ENCODE measurements at regions of chr9 and their contacts with region 1.

Region 1: DNA sequence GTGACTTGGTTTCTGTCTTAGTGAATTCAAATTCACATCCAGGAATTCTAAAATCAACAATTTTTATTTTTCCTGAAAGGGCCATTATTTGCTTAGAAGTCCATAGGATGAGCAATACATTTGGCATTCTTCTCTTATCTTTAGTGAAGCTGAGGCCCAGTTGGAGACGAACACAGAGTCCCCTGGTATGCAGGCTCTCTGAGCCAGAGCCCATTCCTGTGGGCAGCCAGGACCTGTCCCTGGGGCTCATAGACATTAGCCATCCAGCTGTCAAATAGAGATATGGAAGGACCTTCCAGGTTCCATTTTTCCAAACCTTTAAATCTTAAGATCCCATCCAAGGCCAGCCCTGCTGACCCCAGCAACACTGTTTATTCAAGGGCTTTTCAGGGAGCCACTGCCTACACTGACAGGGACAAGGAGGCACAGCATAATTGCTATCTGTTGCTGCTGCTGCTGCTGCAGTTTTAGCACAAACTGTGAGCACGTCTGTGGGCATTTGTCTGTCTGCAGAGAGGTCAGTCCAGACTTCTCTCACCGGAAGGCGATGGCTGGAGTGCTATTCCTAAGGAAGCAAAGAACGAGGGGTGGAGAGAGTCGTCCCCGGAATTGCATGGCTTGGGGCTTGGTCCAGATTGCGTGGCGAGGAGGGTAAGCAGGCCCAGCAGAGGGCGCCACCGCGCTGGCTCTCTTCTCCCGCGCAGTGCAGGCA is 639.0 kb downstream of the CCDC171 start:
- DNase-seq: peak; percentile 35
- H3K4me3 ChIP-seq: no peak overlapping the region
- H3K27ac ChIP-seq: no peak overlapping the region
- H3K4me1 ChIP-seq: peaks cover 6% of the 10 kb centered on the region
- H3K27me3 ChIP-seq: no peaks in the 10 kb centered on the region
- CTCF ChIP-seq: peak; percentile 61 to 88

Region 2: GRCh38 chr9:15873569-15874177 is 318.2 kb before region 1 on chr9:
- CTCF ChIA-PET with region 1: no interaction called
- dilution Hi-C with region 1: no loop called
- in situ Hi-C with region 1: no loop called
- intact Hi-C with region 1: loop called (anchors 2 kb)
- DNase-seq: peak; percentile 30
- H3K4me3 ChIP-seq: no peak overlapping the region
- H3K27ac ChIP-seq: peak overlapping the region; percentile 5
- H3K4me1 ChIP-seq: no peaks in the 10 kb centered on the region
- H3K27me3 ChIP-seq: no peaks in the 10 kb centered on the region
- CTCF ChIP-seq: peak; percentile 53 to 68

Region 3: DNA sequence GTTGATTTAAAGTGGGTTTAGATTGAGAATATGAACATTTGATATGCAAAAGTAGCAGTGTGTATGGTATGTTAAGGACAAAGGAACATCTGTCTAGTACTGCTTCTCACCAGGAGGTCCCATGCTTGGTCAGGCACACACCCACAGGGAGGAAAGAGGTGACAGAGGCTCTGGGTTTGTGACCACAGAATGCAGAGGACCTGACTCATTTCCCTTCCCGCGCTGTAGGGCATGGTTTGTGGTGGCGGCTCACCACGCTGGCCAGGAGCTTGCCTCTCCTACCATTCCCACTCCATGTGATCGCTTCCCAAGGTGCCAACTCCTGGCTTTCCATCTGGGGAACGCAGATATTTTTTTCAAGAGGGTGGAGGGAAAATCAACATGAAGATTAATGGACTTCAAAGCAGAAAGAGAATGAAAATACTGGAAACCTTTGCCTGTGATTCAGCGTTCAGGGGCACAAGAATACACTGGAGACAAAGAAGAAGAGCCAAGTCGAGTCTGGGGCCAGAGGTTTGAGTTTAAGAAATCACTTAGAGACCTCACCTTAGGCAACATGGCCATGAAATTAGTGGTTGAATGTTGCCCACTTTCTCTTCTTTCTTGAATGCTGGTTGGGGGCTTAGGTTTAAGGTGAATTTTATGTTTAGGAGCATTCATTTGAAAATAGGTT is 161.2 kb before region 1 on chr9:
- CTCF ChIA-PET with region 1: no interaction called
- dilution Hi-C with region 1: no loop called
- in situ Hi-C with region 1: no loop called
- intact Hi-C with region 1: loop called (anchors 10 kb)
- DNase-seq: peak; percentile 91
- H3K4me3 ChIP-seq: no peak overlapping the region
- H3K27ac ChIP-seq: no peak overlapping the region
- H3K4me1 ChIP-seq: peaks cover 35% of the 10 kb centered on the region
- H3K27me3 ChIP-seq: no peaks in the 10 kb centered on the region
- CTCF ChIP-seq: no peak

Region 4: DNA sequence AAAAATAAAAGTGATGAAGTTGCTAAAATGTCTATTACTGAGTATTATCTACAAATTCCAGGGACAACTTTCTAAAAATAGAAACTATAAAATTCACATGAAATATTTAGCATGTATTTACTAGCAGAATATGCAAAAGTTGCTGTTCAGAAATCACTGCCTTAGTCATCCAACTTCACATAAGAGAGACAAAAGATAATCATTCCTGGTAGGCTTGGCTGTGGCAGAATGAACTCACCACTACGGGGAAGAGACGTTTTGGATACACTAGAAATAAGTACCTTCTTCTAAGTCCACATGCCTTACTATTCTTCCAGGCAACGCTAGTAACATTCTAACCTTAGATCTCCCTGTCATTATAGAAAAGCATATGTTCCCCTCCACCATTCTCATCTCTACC is 406.5 kb after region 1 on chr9:
- CTCF ChIA-PET with region 1: no interaction called
- dilution Hi-C with region 1: no loop called
- in situ Hi-C with region 1: no loop called
- intact Hi-C with region 1: loop called (anchors 1 kb)
- DNase-seq: no peak
- H3K4me3 ChIP-seq: no peak overlapping the region
- H3K27ac ChIP-seq: no peak overlapping the region
- H3K4me1 ChIP-seq: no peaks in the 10 kb centered on the region
- H3K27me3 ChIP-seq: no peaks in the 10 kb centered on the region
- CTCF ChIP-seq: no peak

Measured in mammary epithelial cell (primary cell).